ENCODE measurements at regions of chr18 and their contacts with region 1.

Region 1: DNA sequence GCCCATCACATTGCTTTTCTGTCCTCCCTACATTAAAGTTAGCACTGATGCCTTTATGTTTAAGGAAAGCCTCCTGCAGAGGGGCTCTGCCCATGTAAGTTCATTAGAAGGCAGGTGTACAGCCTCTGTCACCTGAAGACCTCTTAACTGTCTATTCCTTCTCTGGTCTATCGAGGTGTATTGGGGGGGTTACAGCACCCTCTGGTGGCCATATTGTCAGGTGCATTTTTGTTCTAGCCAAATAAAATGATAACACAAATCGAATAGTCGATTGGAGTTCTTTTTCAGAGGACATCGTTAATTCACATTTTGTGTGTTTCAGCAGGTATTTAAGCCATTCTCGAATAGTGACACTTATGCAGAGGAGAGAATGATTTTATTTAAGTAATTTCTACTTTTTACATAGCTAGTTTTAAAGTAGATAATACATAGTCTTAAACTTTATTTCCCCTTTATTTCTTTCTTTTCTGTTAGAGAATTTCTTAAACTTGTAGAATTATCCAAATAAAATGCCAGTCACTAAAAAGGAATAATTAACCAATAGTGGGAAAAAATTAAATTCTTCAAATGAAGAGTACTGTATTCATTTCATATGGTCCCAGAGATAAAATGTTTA is 136.8 kb downstream of the NEDD4L start:
- DNase-seq: peak; percentile 41 to 51
- ATAC-seq: 0 out of 6 replicates have a peak, but pooled peaks of 1 of the 2 experiments have one; percentile 25
- H3K4me3 ChIP-seq: no peak overlapping the region
- H3K27ac ChIP-seq: peak overlapping the region in 1 of 2 experiments; percentile 24; a peak in 1 of 6 replicates
- H3K4me1 ChIP-seq: peaks cover 68% of the 10 kb centered on the region
- CTCF ChIP-seq: peak; percentile 83
- EP300 ChIP-seq: no peak
- POLR2A ChIP-seq: no peak
- RAD21 ChIP-seq: peak; percentile 74 to 78

Region 2: GRCh38 chr18:58221060-58221725 is 40.3 kb after region 1 on chr18:
- CTCF ChIA-PET with region 1: interaction called, 11 read pairs
- POLR2A ChIA-PET with region 1: no interaction called
- DNase-seq: peak; percentile 71 to 86
- ATAC-seq: peak; percentile 75 to 80
- H3K4me3 ChIP-seq: peak overlapping the region; percentile 45
- H3K27ac ChIP-seq: peak overlapping the region; percentile 73 to 75
- H3K4me1 ChIP-seq: peaks cover 72% of the 10 kb centered on the region
- CTCF ChIP-seq: no peak
- EP300 ChIP-seq: 0 out of 5 replicates have a peak, but pooled peaks of 1 of the 2 experiments have one; percentile 13
- POLR2A ChIP-seq: no peak
- RAD21 ChIP-seq: no peak

Region 3: DNA sequence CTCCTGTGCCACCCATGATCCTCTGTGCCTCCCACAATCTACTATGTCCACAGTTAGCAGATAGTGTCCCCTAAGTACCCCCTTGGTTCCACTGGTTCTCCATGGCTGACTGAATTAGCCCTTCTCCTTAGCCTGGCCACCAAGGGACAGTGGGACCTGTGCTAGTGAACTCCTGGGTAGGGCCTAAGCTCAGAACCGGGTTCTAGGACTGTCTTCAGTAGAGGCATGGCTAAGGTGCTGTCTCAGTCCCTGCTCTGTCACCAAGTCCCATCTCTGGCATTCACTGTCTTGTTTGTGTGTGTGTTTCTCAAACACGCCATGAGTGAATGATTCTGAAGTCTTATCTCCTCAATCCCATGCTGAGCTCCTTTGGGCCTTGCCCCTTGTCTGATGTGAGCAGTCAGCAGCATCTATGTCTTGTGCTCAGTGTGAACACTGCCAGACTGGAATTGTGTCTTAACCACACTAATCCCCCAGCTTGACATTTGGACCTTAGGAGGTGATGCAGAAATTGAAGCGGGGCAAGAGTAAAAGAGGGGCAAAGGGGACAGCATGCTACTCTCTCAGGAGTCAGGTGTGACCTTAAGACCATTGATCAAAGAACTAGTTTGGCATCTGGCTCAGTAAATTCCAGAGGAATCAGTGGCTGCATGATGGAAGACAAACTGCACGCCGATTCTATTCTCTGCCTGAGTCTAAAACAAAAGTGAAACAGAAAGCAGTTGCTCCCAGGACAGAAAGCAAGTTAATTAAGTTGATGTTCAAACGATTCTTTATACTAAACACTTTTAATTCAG is 257.5 kb after region 1 on chr18:
- CTCF ChIA-PET with region 1: no interaction called
- POLR2A ChIA-PET with region 1: no interaction called
- DNase-seq: no peak
- ATAC-seq: no peak
- H3K4me3 ChIP-seq: no peak overlapping the region
- H3K27ac ChIP-seq: no peak overlapping the region
- H3K4me1 ChIP-seq: no peaks in the 10 kb centered on the region
- CTCF ChIP-seq: no peak
- EP300 ChIP-seq: no peak
- POLR2A ChIP-seq: no peak
- RAD21 ChIP-seq: no peak

Measured in A549 (cell line).